ENCODE measurements at regions of chr17 and their contacts with region 1.

Region 1: GRCh38 chr17:57068222-57068658 is 16.8 kb upstream of the AKAP1 start:
- DNase-seq: no peak
- H3K4me3 Mint-ChIP-seq: no peak overlapping the region
- H3K27ac Mint-ChIP-seq: no peak overlapping the region
- H3K4me1 Mint-ChIP-seq: no peaks in the 10 kb centered on the region
- H3K27me3 Mint-ChIP-seq: no peaks in the 10 kb centered on the region
- CTCF ChIP-seq: no peak

Region 2: DNA sequence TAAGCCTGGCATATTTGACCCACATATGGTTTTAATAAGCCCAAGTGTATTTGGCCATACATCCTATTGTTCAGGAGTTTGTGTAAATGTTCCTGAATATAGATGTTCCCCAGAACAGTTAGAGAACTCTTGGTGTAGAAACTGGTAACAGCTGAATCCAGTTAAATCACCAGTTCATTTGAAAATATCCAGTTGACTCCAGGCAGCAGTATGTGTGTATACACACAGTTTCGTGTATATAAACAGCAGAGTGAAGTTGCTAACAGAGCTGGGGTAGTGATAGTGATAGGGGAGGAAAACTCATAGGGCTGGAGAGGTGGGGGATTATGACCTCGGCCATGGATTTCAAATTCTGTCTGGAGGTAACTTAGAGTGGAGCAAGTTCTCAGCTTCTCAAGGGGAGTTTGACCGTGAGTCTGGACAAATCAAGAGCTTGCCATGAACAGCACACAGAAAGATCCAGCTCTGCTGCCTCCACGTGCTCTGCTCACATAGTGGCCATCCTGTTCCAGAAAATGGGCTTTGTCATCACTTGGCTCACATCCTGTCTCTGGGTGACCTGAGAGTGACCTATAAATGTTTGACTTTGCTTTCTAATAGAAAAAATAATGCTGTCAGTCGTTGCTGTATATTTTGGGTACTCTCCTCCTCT is 1616.0 kb before region 1 on chr17:
- CTCF ChIA-PET with region 1: no interaction called
- intact Hi-C with region 1: no loop called
- DNase-seq: peak; percentile 15
- H3K4me3 Mint-ChIP-seq: no peak overlapping the region
- H3K27ac Mint-ChIP-seq: no peak overlapping the region
- H3K4me1 Mint-ChIP-seq: peaks cover 42% of the 10 kb centered on the region
- H3K27me3 Mint-ChIP-seq: no peaks in the 10 kb centered on the region
- CTCF ChIP-seq: no peak

Region 3: GRCh38 chr17:56977673-56978395 is 90.4 kb before region 1 on chr17 and contains the start of gene SCPEP1:
- CTCF ChIA-PET with region 1: no interaction called
- intact Hi-C with region 1: no loop called
- DNase-seq: peak; percentile 66
- H3K4me3 Mint-ChIP-seq: peak within 1 kb of the TSS; percentile 73
- H3K27ac Mint-ChIP-seq: peak within 1 kb of the TSS; percentile 53
- H3K4me1 Mint-ChIP-seq: peaks cover 15% of the 10 kb centered on the region
- H3K27me3 Mint-ChIP-seq: no peaks in the 10 kb centered on the region
- CTCF ChIP-seq: no peak
- total RNA-seq, gene SCPEP1: 17.6 and 20.2 TPM in 2 replicates

Region 4: GRCh38 chr17:57045868-57046704 is 22.2 kb before region 1 on chr17:
- CTCF ChIA-PET with region 1: interaction called, 11 read pairs
- intact Hi-C with region 1: no loop called
- DNase-seq: no peak
- H3K4me3 Mint-ChIP-seq: peak overlapping the region; percentile 87
- H3K27ac Mint-ChIP-seq: peak overlapping the region; percentile 20
- H3K4me1 Mint-ChIP-seq: peaks cover 8% of the 10 kb centered on the region
- H3K27me3 Mint-ChIP-seq: peaks cover 47% of the 10 kb centered on the region
- CTCF ChIP-seq: no peak